A673 (cell line): ENCODE measurements at regions of chr19 and their contacts with region 1.

Region 1: GRCh38 chr19:4400135-4400936 is at the start of gene SH3GL1:
- DNase-seq: peak; percentile 95
- H3K4me3 ChIP-seq: peak within 1 kb of the TSS; percentile 97
- H3K27ac ChIP-seq: peak within 1 kb of the TSS; percentile 93
- H3K4me1 ChIP-seq: peaks cover 3% of the 10 kb centered on the region
- H3K27me3 ChIP-seq: no peaks in the 10 kb centered on the region
- CTCF ChIP-seq: peak; percentile 92
- total RNA-seq, gene SH3GL1: 100 and 108 TPM in 2 replicates

Region 2: DNA sequence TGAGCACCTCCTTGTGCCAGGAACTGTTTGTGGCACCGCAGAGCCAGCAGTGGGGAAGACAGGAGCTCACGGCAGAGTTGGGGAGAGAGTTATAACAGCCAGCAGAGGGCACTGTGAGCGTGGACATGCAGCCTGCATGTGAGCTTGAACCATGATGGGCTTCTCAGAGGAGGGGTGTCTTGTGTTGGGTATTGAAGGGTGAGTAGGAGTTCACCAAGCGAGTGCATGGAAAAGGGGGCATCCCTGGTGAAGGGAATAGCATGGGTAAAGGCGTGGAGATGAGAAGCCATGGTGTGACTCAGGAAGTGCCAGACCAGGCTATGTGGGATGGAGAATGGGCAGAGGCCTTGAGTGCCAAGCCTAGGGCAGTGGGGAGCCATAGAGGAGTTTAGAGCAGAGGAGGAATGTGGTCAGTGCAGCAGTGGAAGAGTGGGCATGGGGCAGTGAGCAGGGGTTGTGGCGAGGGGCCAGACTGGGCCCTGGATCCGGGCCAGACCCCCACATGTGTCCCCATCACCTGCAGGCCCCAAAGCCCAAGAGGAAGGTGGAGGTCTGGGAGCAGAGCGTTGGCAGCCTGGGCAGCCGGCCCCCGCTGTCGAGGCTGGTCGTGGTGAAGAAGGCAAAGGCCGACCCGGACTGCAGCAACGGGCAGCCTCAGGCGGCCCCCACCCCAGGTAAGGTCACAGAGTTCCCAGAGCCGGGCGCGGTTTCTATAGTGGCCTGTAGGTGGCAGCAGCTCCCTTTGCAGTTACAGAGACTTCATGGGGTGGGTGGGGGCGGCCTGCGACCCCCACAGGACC is 133.0 kb before region 1 on chr19:
- CTCF ChIA-PET with region 1: interaction called, 4 read pairs
- POLR2A ChIA-PET with region 1: no interaction called
- intact Hi-C with region 1: loop called (anchors 1 kb)
- DNase-seq: peak; percentile 76
- H3K4me3 ChIP-seq: no peak overlapping the region
- H3K27ac ChIP-seq: no peak overlapping the region
- H3K4me1 ChIP-seq: no peaks in the 10 kb centered on the region
- H3K27me3 ChIP-seq: no peaks in the 10 kb centered on the region
- CTCF ChIP-seq: peak; percentile 80

Region 3: GRCh38 chr19:4375164-4376027 is 24.9 kb before region 1 on chr19:
- CTCF ChIA-PET with region 1: interaction called, 12 read pairs
- POLR2A ChIA-PET with region 1: no interaction called
- intact Hi-C with region 1: no loop called
- DNase-seq: peak; percentile 95
- H3K4me3 ChIP-seq: peak overlapping the region; percentile 2
- H3K27ac ChIP-seq: peak overlapping the region; percentile 82
- H3K4me1 ChIP-seq: peaks cover 49% of the 10 kb centered on the region
- H3K27me3 ChIP-seq: no peaks in the 10 kb centered on the region
- CTCF ChIP-seq: peak; percentile 78

Region 4: GRCh38 chr19:4471403-4472173 is 71.3 kb after region 1 on chr19:
- CTCF ChIA-PET with region 1: interaction called, 4 read pairs
- POLR2A ChIA-PET with region 1: no interaction called
- intact Hi-C with region 1: loop called (anchors 5 kb)
- DNase-seq: peak; percentile 100
- H3K4me3 ChIP-seq: peak overlapping the region; percentile 99
- H3K27ac ChIP-seq: peak overlapping the region; percentile 71
- H3K4me1 ChIP-seq: no peaks in the 10 kb centered on the region
- H3K27me3 ChIP-seq: no peaks in the 10 kb centered on the region
- CTCF ChIP-seq: no peak

Region 5: DNA sequence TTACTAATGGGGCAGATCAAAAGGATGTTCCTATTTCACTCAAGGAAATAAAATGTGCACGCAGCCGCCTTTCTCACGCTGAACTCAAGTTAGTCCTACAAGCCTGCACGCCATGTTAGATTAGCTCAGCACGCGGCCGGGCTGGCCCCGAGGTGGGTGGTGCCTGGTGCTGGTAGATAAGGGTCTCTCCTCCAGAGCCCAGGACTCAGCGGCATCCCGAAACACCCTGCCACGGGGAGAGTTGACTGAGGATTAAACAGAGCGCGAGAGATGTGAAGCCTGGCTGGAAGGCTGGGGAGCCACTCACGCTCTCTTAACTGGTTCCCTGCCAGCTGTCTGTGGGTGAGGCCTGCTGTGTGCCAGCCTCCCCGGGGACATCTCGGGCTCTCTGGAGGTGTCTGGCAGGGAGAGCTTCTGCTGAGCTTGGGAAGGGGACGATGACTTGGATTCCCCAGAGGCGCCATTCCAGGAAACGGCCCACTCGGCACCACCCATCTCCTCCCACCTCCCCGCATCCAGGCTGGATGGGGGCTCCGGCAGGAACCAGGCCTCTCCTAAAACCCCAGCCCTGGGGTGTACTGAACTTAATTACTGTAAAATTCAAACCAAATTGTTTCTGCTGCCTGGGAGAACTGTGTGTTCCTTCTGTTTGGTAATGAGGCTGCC is 690.8 kb after region 1 on chr19:
- CTCF ChIA-PET with region 1: interaction called, 11 read pairs
- POLR2A ChIA-PET with region 1: no interaction called
- intact Hi-C with region 1: no loop called
- DNase-seq: peak; percentile 94
- H3K4me3 ChIP-seq: no peak overlapping the region
- H3K27ac ChIP-seq: peak overlapping the region; percentile 100
- H3K4me1 ChIP-seq: peaks cover 64% of the 10 kb centered on the region
- H3K27me3 ChIP-seq: no peaks in the 10 kb centered on the region
- CTCF ChIP-seq: no peak